Activated B cell treated with CpG ODN at 0.5 μM for 24 hours (primary cell): ENCODE measurements at regions of chr2 and their contacts with region 1.

Region 1: GRCh38 chr2:101419096-101419663 is 31.9 kb upstream of the CREG2 start:
- DNase-seq: no peak
- ATAC-seq: peak; percentile 88
- H3K4me3 Mint-ChIP-seq: no peak overlapping the region
- H3K27ac Mint-ChIP-seq: no peak overlapping the region
- H3K4me1 Mint-ChIP-seq: peaks cover 6% of the 10 kb centered on the region
- H3K27me3 Mint-ChIP-seq: no peaks in the 10 kb centered on the region
- CTCF ChIP-seq: no peak

Region 2: DNA sequence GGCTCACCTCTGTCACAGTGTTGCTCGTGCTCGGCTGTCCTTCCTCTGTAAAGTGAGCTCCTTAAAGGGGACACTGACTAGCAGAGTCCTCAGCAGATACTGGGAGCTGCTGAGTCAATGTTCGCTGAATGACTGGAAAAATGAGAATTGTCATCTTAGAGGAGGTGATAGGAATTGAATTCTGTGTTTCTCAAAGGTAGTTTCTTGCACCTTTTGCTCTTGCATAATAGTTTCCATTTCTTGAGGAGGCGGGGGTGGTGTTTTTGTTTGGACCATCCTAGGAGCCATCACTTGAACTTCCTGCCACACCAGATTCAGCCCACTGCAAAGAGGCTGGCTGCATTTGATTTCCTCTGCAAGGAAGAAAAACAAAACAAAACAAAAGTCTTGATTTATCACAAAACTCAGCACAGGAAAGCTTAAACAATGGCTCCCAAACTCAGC is 67.1 kb after region 1 on chr2:
- CTCF ChIA-PET with region 1: no interaction called
- POLR2A ChIA-PET with region 1: no interaction called
- intact Hi-C with region 1: no loop called
- DNase-seq: no peak
- ATAC-seq: no peak
- H3K4me3 Mint-ChIP-seq: no peak overlapping the region
- H3K27ac Mint-ChIP-seq: no peak overlapping the region
- H3K4me1 Mint-ChIP-seq: no peaks in the 10 kb centered on the region
- H3K27me3 Mint-ChIP-seq: peaks cover 12% of the 10 kb centered on the region
- CTCF ChIP-seq: no peak

Region 3: GRCh38 chr2:101725515-101726192 is 306.5 kb after region 1 on chr2:
- CTCF ChIA-PET with region 1: interaction called, 6 read pairs
- POLR2A ChIA-PET with region 1: no interaction called
- intact Hi-C with region 1: loop called (anchors 1 kb)
- DNase-seq: no peak
- ATAC-seq: no peak
- H3K4me3 Mint-ChIP-seq: no peak overlapping the region
- H3K27ac Mint-ChIP-seq: peak overlapping the region; percentile 65
- H3K4me1 Mint-ChIP-seq: peaks cover 100% of the 10 kb centered on the region
- H3K27me3 Mint-ChIP-seq: no peaks in the 10 kb centered on the region
- CTCF ChIP-seq: no peak

Region 4: GRCh38 chr2:101770726-101771125 is 351.5 kb after region 1 on chr2:
- CTCF ChIA-PET with region 1: interaction called, 5 read pairs
- POLR2A ChIA-PET with region 1: no interaction called
- intact Hi-C with region 1: loop called (anchors 5 kb)
- DNase-seq: no peak
- ATAC-seq: peak; percentile 44
- H3K4me3 Mint-ChIP-seq: no peak overlapping the region
- H3K27ac Mint-ChIP-seq: peak overlapping the region; percentile 12
- H3K4me1 Mint-ChIP-seq: peaks cover 95% of the 10 kb centered on the region
- H3K27me3 Mint-ChIP-seq: no peaks in the 10 kb centered on the region
- CTCF ChIP-seq: peak; percentile 0

Region 5: GRCh38 chr2:101823347-101823791 is 404.2 kb after region 1 on chr2:
- CTCF ChIA-PET with region 1: interaction called, 162 read pairs
- POLR2A ChIA-PET with region 1: interaction called, 6 read pairs
- intact Hi-C with region 1: no loop called
- DNase-seq: no peak
- ATAC-seq: peak; percentile 86
- H3K4me3 Mint-ChIP-seq: no peak overlapping the region
- H3K27ac Mint-ChIP-seq: peak overlapping the region; percentile 57
- H3K4me1 Mint-ChIP-seq: peaks cover 68% of the 10 kb centered on the region
- H3K27me3 Mint-ChIP-seq: no peaks in the 10 kb centered on the region
- CTCF ChIP-seq: no peak

Region 6: GRCh38 chr2:101831351-101831865 is 412.2 kb after region 1 on chr2:
- CTCF ChIA-PET with region 1: interaction called, 162 read pairs
- POLR2A ChIA-PET with region 1: interaction called, 13 read pairs
- intact Hi-C with region 1: loop called (anchors 1 kb)
- DNase-seq: peak; percentile 37
- ATAC-seq: peak; percentile 82
- H3K4me3 Mint-ChIP-seq: no peak overlapping the region
- H3K27ac Mint-ChIP-seq: peak overlapping the region; percentile 56
- H3K4me1 Mint-ChIP-seq: peaks cover 49% of the 10 kb centered on the region
- H3K27me3 Mint-ChIP-seq: no peaks in the 10 kb centered on the region
- CTCF ChIP-seq: no peak

Region 7: DNA sequence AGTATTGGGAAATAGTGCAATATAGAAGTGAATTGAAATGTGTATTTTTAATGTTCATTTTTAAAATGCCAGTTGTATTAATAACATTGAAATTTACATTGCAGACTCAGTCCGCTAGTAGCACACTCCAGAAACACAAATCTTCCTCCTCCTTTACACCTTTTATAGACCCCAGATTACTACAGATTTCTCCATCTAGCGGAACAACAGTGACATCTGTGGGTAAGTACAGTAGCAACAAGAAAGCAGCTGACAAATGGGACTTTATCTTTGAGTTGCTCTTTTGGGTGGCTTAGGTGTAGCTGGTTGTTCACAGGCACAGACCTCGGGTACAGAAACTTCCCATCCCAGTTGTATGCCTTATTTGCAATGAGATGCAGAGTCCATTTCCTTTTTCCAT is 454.4 kb after region 1 on chr2:
- CTCF ChIA-PET with region 1: interaction called, 5 read pairs
- POLR2A ChIA-PET with region 1: no interaction called
- intact Hi-C with region 1: loop called (anchors 1 kb)
- DNase-seq: no peak
- ATAC-seq: no peak
- H3K4me3 Mint-ChIP-seq: no peak overlapping the region
- H3K27ac Mint-ChIP-seq: no peak overlapping the region
- H3K4me1 Mint-ChIP-seq: no peaks in the 10 kb centered on the region
- H3K27me3 Mint-ChIP-seq: no peaks in the 10 kb centered on the region
- CTCF ChIP-seq: no peak